ENCODE measurements at regions of chr14 and their contacts with region 1.

Region 1: GRCh38 chr14:64986578-64987571 is at the start of gene FNTB:
- DNase-seq: peak; percentile 83 to 97 (median 88)
- ATAC-seq: peak; percentile 89
- H3K4me3 ChIP-seq: peak within 1 kb of the TSS; percentile 84
- H3K4me3 Mint-ChIP-seq: peak within 1 kb of the TSS; percentile 97
- H3K27ac ChIP-seq: peak within 1 kb of the TSS; percentile 52 to 69
- H3K27ac Mint-ChIP-seq: peak within 1 kb of the TSS; percentile 91
- H3K4me1 ChIP-seq: peaks cover 50% of the 10 kb centered on the region
- H3K4me1 Mint-ChIP-seq: peaks cover 62% of the 10 kb centered on the region
- H3K27me3 ChIP-seq: no peaks in the 10 kb centered on the region
- H3K27me3 Mint-ChIP-seq: no peaks in the 10 kb centered on the region
- CTCF ChIP-seq: peak; percentile 90
- total RNA-seq, gene FNTB: 7.5 to 7.9 TPM

Region 2: GRCh38 chr14:64753346-64753745 is 233.5 kb before region 1 on chr14:
- CTCF ChIA-PET with region 1: no interaction called
- POLR2A ChIA-PET with region 1: no interaction called
- intact Hi-C with region 1: no loop called
- DNase-seq: no peak
- ATAC-seq: no peak
- H3K4me3 ChIP-seq: no peak overlapping the region
- H3K4me3 Mint-ChIP-seq: no peak overlapping the region
- H3K27ac ChIP-seq: no peak overlapping the region
- H3K27ac Mint-ChIP-seq: no peak overlapping the region
- H3K4me1 ChIP-seq: peaks cover 57% of the 10 kb centered on the region
- H3K4me1 Mint-ChIP-seq: peaks cover 29% of the 10 kb centered on the region
- H3K27me3 ChIP-seq: no peaks in the 10 kb centered on the region
- H3K27me3 Mint-ChIP-seq: no peaks in the 10 kb centered on the region
- CTCF ChIP-seq: no peak

Region 3: DNA sequence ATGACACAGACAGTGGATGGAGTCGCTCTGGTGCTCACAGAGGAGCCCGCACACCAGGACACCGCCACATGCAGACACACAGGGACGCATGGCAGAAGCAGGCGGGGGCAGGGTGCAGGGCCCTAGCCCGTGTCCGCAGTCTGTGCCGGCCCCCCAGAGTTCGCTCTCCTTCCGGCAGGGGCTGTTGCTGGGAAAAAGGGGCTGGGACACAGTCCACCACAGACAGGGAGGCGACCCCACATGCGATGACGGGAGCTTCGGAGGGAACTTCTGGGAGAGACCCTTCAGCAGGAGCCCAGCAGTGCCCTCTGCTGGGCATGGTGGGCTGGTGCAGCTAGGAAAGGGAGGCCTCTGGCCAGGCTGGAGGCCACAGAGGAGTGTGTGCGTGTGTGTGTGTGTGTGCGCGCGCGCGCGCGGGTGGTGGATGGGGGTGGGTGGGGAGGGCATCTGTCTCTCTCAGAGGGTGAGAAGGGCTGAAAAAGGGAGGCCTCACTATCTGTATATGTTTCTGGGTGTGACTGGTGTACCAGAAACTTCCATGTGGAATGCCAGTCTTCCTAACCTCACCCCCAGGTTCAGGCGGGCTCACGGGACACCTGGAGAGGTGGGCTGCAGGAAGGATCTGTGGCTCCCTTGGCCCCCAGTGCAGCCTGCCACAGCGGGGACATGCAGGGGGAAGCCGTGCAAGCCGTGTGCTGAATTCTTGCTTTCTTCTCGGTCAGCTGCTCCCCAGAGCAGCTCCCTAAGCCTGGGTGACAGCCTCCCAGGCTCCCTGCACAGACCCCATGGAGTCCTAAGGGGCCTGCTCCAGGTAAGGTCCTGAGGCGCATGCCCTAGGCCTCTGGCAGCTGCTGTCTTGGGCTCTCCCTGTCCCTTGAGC is 222.0 kb before region 1 on chr14:
- CTCF ChIA-PET with region 1: no interaction called
- POLR2A ChIA-PET with region 1: no interaction called
- intact Hi-C with region 1: loop called in 1 of 2 experiments (anchors 5 kb)
- DNase-seq: peak; percentile 44 to 86 (median 58)
- ATAC-seq: peak; percentile 76
- H3K4me3 ChIP-seq: peak overlapping the region; percentile 33
- H3K4me3 Mint-ChIP-seq: peak overlapping the region; percentile 67
- H3K27ac ChIP-seq: no peak overlapping the region
- H3K27ac Mint-ChIP-seq: no peak overlapping the region
- H3K4me1 ChIP-seq: peaks cover 61% of the 10 kb centered on the region
- H3K4me1 Mint-ChIP-seq: peaks cover 32% of the 10 kb centered on the region
- H3K27me3 ChIP-seq: no peaks in the 10 kb centered on the region
- H3K27me3 Mint-ChIP-seq: no peaks in the 10 kb centered on the region
- CTCF ChIP-seq: peak; percentile 85

Region 4: GRCh38 chr14:64914237-64914971 is 72.5 kb before region 1 on chr14 and contains the start of gene CHURC1:
- CTCF ChIA-PET with region 1: interaction called, 5 read pairs
- POLR2A ChIA-PET with region 1: interaction called, 17 read pairs
- intact Hi-C with region 1: loop called in 1 of 2 experiments (anchors 10 kb)
- DNase-seq: peak; percentile 94 to 99 (median 96)
- ATAC-seq: peak; percentile 95
- H3K4me3 ChIP-seq: peak within 1 kb of the TSS; percentile 86
- H3K4me3 Mint-ChIP-seq: peak within 1 kb of the TSS; percentile 93
- H3K27ac ChIP-seq: peak within 1 kb of the TSS; percentile 99
- H3K27ac Mint-ChIP-seq: peak within 1 kb of the TSS; percentile 88
- H3K4me1 ChIP-seq: peaks cover 34% of the 10 kb centered on the region
- H3K4me1 Mint-ChIP-seq: peaks cover 57% of the 10 kb centered on the region
- H3K27me3 ChIP-seq: peaks cover 0 to under 1% of the 10 kb centered on the region in 2 experiments
- H3K27me3 Mint-ChIP-seq: no peaks in the 10 kb centered on the region
- CTCF ChIP-seq: no peak
- total RNA-seq, gene CHURC1: 50.1 to 54.0 TPM

Region 5: DNA sequence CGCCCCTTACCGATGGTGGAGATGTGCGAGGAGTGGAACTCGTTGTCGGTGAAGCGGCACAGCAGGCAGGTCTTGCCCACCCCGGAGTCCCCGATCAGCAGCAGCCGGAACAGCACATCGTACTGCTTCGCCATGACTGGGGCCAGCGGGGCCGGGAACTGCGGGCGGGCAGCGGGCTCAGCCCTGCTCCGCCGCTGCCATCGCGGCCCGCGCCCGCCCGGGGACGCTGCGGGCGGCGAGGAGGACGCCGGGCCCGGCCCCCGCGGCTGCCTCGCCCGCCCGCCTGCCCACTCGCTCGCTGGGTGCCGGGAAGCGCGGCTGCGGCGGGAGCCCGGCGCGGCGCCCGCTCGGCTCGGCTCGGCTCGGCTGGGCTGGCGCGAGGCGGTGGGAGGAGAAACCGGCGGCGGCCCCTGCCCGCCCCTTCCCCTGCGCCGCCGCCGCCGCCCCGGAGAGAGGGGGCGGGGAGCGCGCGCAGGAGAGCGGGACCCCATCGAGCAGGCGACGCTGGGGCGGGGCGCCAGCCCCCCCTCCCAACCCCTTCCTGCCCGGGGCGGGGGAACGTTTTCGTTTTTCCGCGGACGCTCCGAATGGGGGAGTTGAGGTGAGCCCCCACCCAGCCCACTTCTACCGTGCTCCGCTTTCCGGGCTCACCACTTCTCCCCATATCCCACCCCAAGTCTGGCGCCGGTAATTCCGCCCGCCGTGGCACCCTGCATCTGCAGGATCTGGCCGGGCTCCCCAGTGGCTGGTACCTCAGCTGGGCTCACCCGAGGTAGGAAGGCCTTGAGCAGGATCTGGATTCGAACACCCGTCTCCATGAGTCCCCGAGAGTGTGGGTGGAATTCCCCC is 14.7 kb before region 1 on chr14 and contains the start of gene RAB15:
- CTCF ChIA-PET with region 1: interaction called, 6 read pairs
- POLR2A ChIA-PET with region 1: interaction called, 17 read pairs
- intact Hi-C with region 1: no loop called
- DNase-seq: peak in 13 of 14 experiments; percentile 8 to 72 (median 43)
- ATAC-seq: peak; percentile 68
- H3K4me3 ChIP-seq: peak within 1 kb of the TSS; percentile 69
- H3K4me3 Mint-ChIP-seq: peak within 1 kb of the TSS; percentile 90
- H3K27ac ChIP-seq: no peak within 1 kb of the TSS
- H3K27ac Mint-ChIP-seq: peak within 1 kb of the TSS; percentile 61
- H3K4me1 ChIP-seq: peaks cover 19% of the 10 kb centered on the region
- H3K4me1 Mint-ChIP-seq: peaks cover 28% of the 10 kb centered on the region
- H3K27me3 ChIP-seq: no peaks in the 10 kb centered on the region
- H3K27me3 Mint-ChIP-seq: no peaks in the 10 kb centered on the region
- CTCF ChIP-seq: no peak
- total RNA-seq, gene RAB15: 2.6 to 3.8 TPM

Region 6: GRCh38 chr14:65019944-65020566 is 33.2 kb after region 1 on chr14:
- CTCF ChIA-PET with region 1: interaction called, 17 read pairs
- POLR2A ChIA-PET with region 1: no interaction called
- intact Hi-C with region 1: loop called in 1 of 2 experiments (anchors 2 kb)
- DNase-seq: peak in 4 of 14 experiments; percentile 8 to 42 (median 33)
- ATAC-seq: no peak
- H3K4me3 ChIP-seq: no peak overlapping the region
- H3K4me3 Mint-ChIP-seq: no peak overlapping the region
- H3K27ac ChIP-seq: no peak overlapping the region
- H3K27ac Mint-ChIP-seq: no peak overlapping the region
- H3K4me1 ChIP-seq: no peaks in the 10 kb centered on the region
- H3K4me1 Mint-ChIP-seq: no peaks in the 10 kb centered on the region
- H3K27me3 ChIP-seq: no peaks in the 10 kb centered on the region
- H3K27me3 Mint-ChIP-seq: no peaks in the 10 kb centered on the region
- CTCF ChIP-seq: no peak

Region 7: GRCh38 chr14:65824285-65824977 is 837.6 kb after region 1 on chr14:
- CTCF ChIA-PET with region 1: no interaction called
- POLR2A ChIA-PET with region 1: no interaction called
- intact Hi-C with region 1: loop called in 1 of 2 experiments (anchors 10 kb)
- DNase-seq: peak; percentile 29 to 82 (median 42)
- ATAC-seq: peak; percentile 97
- H3K4me3 ChIP-seq: no peak overlapping the region
- H3K4me3 Mint-ChIP-seq: no peak overlapping the region
- H3K27ac ChIP-seq: no peak overlapping the region
- H3K27ac Mint-ChIP-seq: no peak overlapping the region
- H3K4me1 ChIP-seq: peaks cover 3% of the 10 kb centered on the region
- H3K4me1 Mint-ChIP-seq: peaks cover 13% of the 10 kb centered on the region
- H3K27me3 ChIP-seq: no peaks in the 10 kb centered on the region
- H3K27me3 Mint-ChIP-seq: no peaks in the 10 kb centered on the region
- CTCF ChIP-seq: peak; percentile 93

Measured in CD4-positive, alpha-beta T cell (primary cell).